ENCODE measurements at regions of chr15 and their contacts with region 1.

Region 1: DNA sequence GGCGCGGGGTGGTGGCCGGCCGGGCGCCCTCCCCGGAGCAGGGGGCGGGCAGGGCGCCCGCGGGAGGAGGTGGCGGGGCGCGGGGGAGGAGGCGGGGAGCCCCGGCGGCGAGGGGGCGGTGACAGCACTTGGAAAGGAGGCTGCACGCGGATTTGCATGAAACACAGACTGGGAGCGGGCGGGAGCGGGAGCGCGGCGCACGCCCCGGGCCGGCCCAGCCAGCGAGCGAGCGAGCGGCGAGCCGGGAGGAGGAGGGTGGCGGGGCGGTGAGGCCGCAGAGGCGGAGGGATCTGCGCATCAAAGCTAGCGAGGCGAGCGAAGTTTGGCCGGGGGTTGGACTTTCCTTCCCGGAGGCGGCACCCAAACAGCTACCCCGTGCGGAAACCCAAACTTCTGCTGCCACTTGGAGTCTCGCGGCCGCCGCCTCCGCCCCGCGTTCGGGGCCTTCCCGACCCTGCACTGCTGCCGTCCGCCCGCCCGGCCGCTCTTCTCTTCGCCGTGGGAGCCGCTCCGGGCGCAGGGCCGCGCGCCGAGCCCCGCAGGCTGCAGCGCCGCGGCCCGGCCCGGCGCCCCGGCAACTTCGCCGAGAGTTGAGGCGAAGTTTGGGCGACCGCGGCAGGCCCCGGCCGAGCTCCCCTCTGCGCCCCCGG is at the start of gene SMAD3:
- DNase-seq: peak; percentile 91 to 96 (median 94)
- ATAC-seq: peak; percentile 78
- H3K4me3 ChIP-seq: peak within 1 kb of the TSS; percentile 79
- H3K27ac ChIP-seq: peak within 1 kb of the TSS; percentile 79
- H3K4me1 ChIP-seq: peaks cover 37 to 45% of the 10 kb centered on the region in 2 experiments
- H3K27me3 ChIP-seq: no peaks in the 10 kb centered on the region
- CTCF ChIP-seq: no peak
- EP300 ChIP-seq: no peak
- POLR2A ChIP-seq: peak; percentile 57; the same call in 1 of the 2 replicates
- RAD21 ChIP-seq: peak in 1 of 2 experiments; percentile 4; a peak in 1 of 4 replicates
- polyA plus RNA-seq, gene SMAD3: 4.3 to 5.0 TPM

Region 2: GRCh38 chr15:66720206-66721006 is 345.2 kb before region 1 on chr15:
- CTCF ChIA-PET with region 1: no interaction called
- POLR2A ChIA-PET with region 1: no interaction called
- in situ Hi-C with region 1: no loop called
- intact Hi-C with region 1: no loop called
- DNase-seq: peak in 3 of 4 experiments; percentile 7 to 65 (median 62)
- ATAC-seq: peak; percentile 34
- H3K4me3 ChIP-seq: no peak overlapping the region
- H3K27ac ChIP-seq: 0 out of 3 replicates have a peak overlapping the region, but pooled peaks have one; percentile 12
- H3K4me1 ChIP-seq: peaks cover 36 to 51% of the 10 kb centered on the region in 2 experiments; a peak in 4 of 5 replicates
- H3K27me3 ChIP-seq: no peaks in the 10 kb centered on the region
- CTCF ChIP-seq: no peak
- EP300 ChIP-seq: no peak
- POLR2A ChIP-seq: no peak
- RAD21 ChIP-seq: no peak

Region 3: DNA sequence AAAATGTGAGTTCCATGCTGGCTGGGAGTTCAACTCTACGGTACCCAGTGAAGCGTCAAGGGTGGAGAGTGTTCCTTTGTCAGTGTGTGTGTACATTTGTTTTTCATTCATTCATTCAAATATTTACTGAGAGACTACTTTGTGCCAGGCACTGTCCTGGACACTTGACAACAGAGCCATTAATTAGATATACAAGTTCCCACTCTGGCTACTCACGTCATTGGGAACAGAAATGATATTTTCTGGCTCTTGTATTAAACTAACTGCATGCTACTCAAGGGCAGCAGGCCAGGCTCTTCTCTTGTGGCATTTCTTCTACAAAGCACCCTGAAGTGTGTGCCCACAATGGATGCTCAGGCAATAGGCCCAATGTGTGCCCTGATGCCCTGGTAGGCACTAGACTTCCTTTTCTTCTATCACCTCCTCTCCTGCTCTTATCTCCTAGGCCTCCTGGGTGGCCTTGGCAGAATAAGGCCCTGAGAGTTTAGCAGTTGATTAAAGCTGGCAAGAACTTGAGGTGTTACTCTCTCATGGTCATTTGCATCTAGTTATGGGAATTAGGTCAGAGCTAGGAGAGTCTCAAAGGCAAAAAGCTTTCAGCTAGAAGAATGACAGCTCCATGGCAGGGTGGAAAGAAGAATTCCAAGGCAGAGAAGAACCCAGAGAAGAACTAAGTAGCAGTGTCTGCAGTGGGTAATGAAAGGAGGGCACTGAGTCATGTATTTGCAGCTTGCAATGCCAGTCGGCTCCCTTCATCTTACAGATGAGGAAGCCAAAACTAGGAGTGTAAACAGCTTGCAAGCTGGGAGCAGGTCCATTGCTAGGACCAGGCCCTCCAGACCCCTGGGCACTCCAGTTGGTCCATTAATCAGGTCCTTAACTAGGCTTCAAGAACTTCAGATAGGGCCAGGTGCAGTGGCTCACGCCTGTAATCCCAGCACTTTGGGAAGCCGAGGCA is 14.2 kb before region 1 on chr15:
- CTCF ChIA-PET with region 1: no interaction called
- POLR2A ChIA-PET with region 1: interaction called, 10 read pairs
- in situ Hi-C with region 1: no loop called
- intact Hi-C with region 1: no loop called
- DNase-seq: no peak
- ATAC-seq: no peak
- H3K4me3 ChIP-seq: no peak overlapping the region
- H3K27ac ChIP-seq: no peak overlapping the region
- H3K4me1 ChIP-seq: peaks cover 0 to 12% of the 10 kb centered on the region in 2 experiments; a peak in 4 of 5 replicates
- H3K27me3 ChIP-seq: no peaks in the 10 kb centered on the region
- CTCF ChIP-seq: no peak
- EP300 ChIP-seq: no peak
- POLR2A ChIP-seq: no peak
- RAD21 ChIP-seq: no peak

Region 4: DNA sequence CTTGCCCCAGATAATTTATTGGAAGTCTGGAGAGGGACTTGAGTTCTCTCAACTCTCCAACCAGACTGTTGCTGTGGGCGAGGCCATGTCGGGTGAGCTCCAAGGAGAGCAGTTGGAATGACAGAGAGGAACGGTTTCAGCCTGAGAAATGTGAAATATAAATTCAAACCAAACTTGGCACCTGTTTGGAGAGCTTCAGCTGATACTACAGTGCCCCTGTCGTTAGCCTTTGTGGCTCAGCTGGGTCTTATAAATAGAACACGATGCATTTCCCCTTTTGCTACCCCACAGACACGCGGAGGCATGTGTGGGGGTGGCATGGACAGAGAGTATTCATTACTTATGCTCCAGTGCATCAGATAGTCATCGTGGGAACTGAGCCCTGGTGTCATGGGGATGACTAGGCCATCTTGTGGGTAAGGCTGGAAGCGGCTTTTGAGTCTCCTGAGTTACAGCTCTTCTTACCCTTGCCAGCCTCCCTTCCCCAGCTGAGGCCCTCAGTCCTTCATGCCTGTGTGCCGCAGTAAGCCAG is 15.4 kb after region 1 on chr15:
- CTCF ChIA-PET with region 1: no interaction called
- POLR2A ChIA-PET with region 1: interaction called, 40 read pairs
- in situ Hi-C with region 1: no loop called
- intact Hi-C with region 1: no loop called
- DNase-seq: peak in 3 of 4 experiments; percentile 46 to 78 (median 77)
- ATAC-seq: peak; percentile 54
- H3K4me3 ChIP-seq: no peak overlapping the region
- H3K27ac ChIP-seq: peak overlapping the region; percentile 69
- H3K4me1 ChIP-seq: peaks cover 14 to 69% of the 10 kb centered on the region in 2 experiments
- H3K27me3 ChIP-seq: no peaks in the 10 kb centered on the region
- CTCF ChIP-seq: peak; percentile 19 to 52 (median 37); a peak in 3 of 6 replicates
- EP300 ChIP-seq: peak; percentile 75
- POLR2A ChIP-seq: no peak
- RAD21 ChIP-seq: peak; percentile 64 to 76

Region 5: GRCh38 chr15:67091071-67091979 is 25.8 kb after region 1 on chr15:
- CTCF ChIA-PET with region 1: no interaction called
- POLR2A ChIA-PET with region 1: interaction called, 6 read pairs
- in situ Hi-C with region 1: no loop called
- intact Hi-C with region 1: loop called (anchors 2 kb)
- DNase-seq: peak; percentile 85 to 98 (median 90)
- ATAC-seq: peak; percentile 89
- H3K4me3 ChIP-seq: peak overlapping the region; percentile 12; the same call in 1 of the 2 replicates
- H3K27ac ChIP-seq: peak overlapping the region; percentile 97
- H3K4me1 ChIP-seq: peaks cover 70 to 72% of the 10 kb centered on the region in 2 experiments
- H3K27me3 ChIP-seq: no peaks in the 10 kb centered on the region
- CTCF ChIP-seq: no peak
- EP300 ChIP-seq: peak; percentile 100
- POLR2A ChIP-seq: peak; percentile 46; the same call in 1 of the 2 replicates
- RAD21 ChIP-seq: peak in 1 of 2 experiments; percentile 37; a peak in 2 of 4 replicates

Region 6: GRCh38 chr15:67097930-67098740 is 32.6 kb after region 1 on chr15:
- CTCF ChIA-PET with region 1: no interaction called
- POLR2A ChIA-PET with region 1: interaction called, 4 read pairs
- in situ Hi-C with region 1: no loop called
- intact Hi-C with region 1: loop called (anchors 2 kb)
- DNase-seq: peak; percentile 68 to 79 (median 74)
- ATAC-seq: peak; percentile 68
- H3K4me3 ChIP-seq: no peak overlapping the region
- H3K27ac ChIP-seq: peak overlapping the region; percentile 81
- H3K4me1 ChIP-seq: peaks cover 25 to 63% of the 10 kb centered on the region in 2 experiments
- H3K27me3 ChIP-seq: no peaks in the 10 kb centered on the region
- CTCF ChIP-seq: no peak
- EP300 ChIP-seq: peak; percentile 6; the same call in 1 of the 2 replicates
- POLR2A ChIP-seq: no peak
- RAD21 ChIP-seq: 0 out of 4 replicates have a peak, but pooled peaks of 1 of the 2 experiments have one; percentile 3

Region 7: GRCh38 chr15:67175643-67176071 is 110.1 kb after region 1 on chr15:
- CTCF ChIA-PET with region 1: no interaction called
- POLR2A ChIA-PET with region 1: no interaction called
- in situ Hi-C with region 1: no loop called
- intact Hi-C with region 1: loop called (anchors 10 kb)
- DNase-seq: no peak
- ATAC-seq: no peak
- H3K4me3 ChIP-seq: no peak overlapping the region
- H3K27ac ChIP-seq: no peak overlapping the region
- H3K4me1 ChIP-seq: peaks cover 17 to 20% of the 10 kb centered on the region in 2 experiments
- H3K27me3 ChIP-seq: no peaks in the 10 kb centered on the region
- CTCF ChIP-seq: no peak
- EP300 ChIP-seq: no peak
- POLR2A ChIP-seq: no peak
- RAD21 ChIP-seq: no peak

Region 8: GRCh38 chr15:67254238-67255175 is 188.9 kb after region 1 on chr15 and contains the starts of genes AAGAB and IQCH:
- CTCF ChIA-PET with region 1: no interaction called
- POLR2A ChIA-PET with region 1: no interaction called
- in situ Hi-C with region 1: no loop called
- intact Hi-C with region 1: loop called (anchors 5 kb)
- DNase-seq: peak; percentile 97
- ATAC-seq: peak; percentile 95
- H3K4me3 ChIP-seq: peak within 1 kb of the TSS; percentile 81
- H3K27ac ChIP-seq: peak within 1 kb of the TSS; percentile 96
- H3K4me1 ChIP-seq: peaks cover 11 to 19% of the 10 kb centered on the region in 2 experiments; a peak in 4 of 5 replicates
- H3K27me3 ChIP-seq: no peaks in the 10 kb centered on the region
- CTCF ChIP-seq: 0 out of 6 replicates have a peak, but pooled peaks of 1 of the 3 experiments have one; percentile 1
- EP300 ChIP-seq: no peak; the same call in 1 of the 2 replicates
- POLR2A ChIP-seq: peak; percentile 97
- RAD21 ChIP-seq: peak in 1 of 2 experiments; percentile 28; a peak in 2 of 4 replicates
- polyA plus RNA-seq, gene AAGAB: 17.8 to 109 TPM
- polyA plus RNA-seq, gene IQCH: 2.5 to 2.7 TPM

Measured in K562 (cell line).